Breast epithelium (tissue), 4 donors: ENCODE measurements at regions of chr20 and their contacts with region 1.

Region 1: GRCh38 chr20:47272893-47273590 is 83.5 kb downstream of the ZMYND8 start:
- DNase-seq: no peak
- H3K4me3 ChIP-seq: no peak overlapping the region
- H3K27ac ChIP-seq: peak overlapping the region; percentile 77 to 87
- H3K4me1 ChIP-seq: peaks cover 13 to 16% of the 10 kb centered on the region in 2 donors
- H3K27me3 ChIP-seq: no peaks in the 10 kb centered on the region
- CTCF ChIP-seq: peak; percentile 97 to 99 (median 98)
- POLR2A ChIP-seq: no peak

Region 2: DNA sequence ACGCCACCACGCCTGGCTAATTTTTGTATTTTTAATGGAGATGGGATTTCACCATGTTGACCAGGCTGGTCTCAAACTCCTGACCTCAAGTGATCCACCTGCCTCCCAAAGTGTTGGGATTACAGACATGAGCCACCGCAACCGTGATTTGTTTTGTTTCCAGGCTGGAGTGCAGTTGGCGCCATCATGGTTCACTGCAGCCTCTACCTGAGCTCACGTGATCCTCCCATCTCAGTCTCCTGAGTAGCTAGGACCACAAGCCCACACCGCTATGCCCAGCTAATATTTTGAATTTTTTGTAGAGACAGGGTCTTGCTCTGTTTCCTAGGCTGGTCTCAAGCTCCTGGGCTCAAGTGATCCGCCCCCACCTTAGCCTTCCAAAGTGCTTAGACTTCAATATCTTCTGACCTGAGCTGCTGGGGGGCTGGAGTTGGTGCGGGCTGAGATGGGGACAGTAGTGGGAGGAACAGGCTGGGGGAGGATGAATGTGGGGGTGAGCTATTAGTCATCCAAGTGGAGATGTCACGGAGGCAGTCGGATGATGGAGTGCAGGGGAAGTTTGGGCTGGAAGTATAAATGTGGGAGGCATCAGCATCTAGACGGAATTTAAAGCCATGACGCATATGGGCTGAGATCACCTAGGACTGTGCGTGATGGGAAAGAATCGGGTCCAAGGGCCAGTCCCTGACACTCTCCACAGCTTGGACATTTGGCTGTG is 106.5 kb after region 1 on chr20:
- intact Hi-C with region 1: loop called (anchors 5 kb)
- DNase-seq: no peak
- H3K4me3 ChIP-seq: no peak overlapping the region
- H3K27ac ChIP-seq: no peak overlapping the region
- H3K4me1 ChIP-seq: no peaks in the 10 kb centered on the region
- H3K27me3 ChIP-seq: no peaks in the 10 kb centered on the region
- CTCF ChIP-seq: no peak
- POLR2A ChIP-seq: no peak